ENCODE measurements at regions of chr1 and their contacts with region 1.

Region 1: GRCh38 chr1:207404849-207405525 is 49.1 kb upstream of the CR2 start:
- DNase-seq: peak in 7 of 9 donors; percentile 25 to 69 (median 56)
- ATAC-seq: peak; percentile 89
- H3K4me3 ChIP-seq: no peak overlapping the region
- H3K4me3 Mint-ChIP-seq: no peak overlapping the region
- H3K27ac ChIP-seq: no peak overlapping the region
- H3K27ac Mint-ChIP-seq: no peak overlapping the region
- H3K4me1 ChIP-seq: no peaks in the 10 kb centered on the region
- H3K4me1 Mint-ChIP-seq: peaks cover 0 to 13% (median 0%) of the 10 kb centered on the region in 7 donors
- H3K27me3 ChIP-seq: no peaks in the 10 kb centered on the region
- H3K27me3 Mint-ChIP-seq: peaks cover 0 to 3% (median 0%) of the 10 kb centered on the region in 5 donors

Region 2: GRCh38 chr1:206649261-206649921 is 755.6 kb before region 1 on chr1:
- CTCF ChIA-PET with region 1: no interaction called
- POLR2A ChIA-PET with region 1: no interaction called
- intact Hi-C with region 1: no loop called
- DNase-seq: no peak
- ATAC-seq: no peak
- H3K4me3 ChIP-seq: no peak overlapping the region
- H3K4me3 Mint-ChIP-seq: no peak overlapping the region
- H3K27ac ChIP-seq: no peak overlapping the region
- H3K27ac Mint-ChIP-seq: no peak overlapping the region
- H3K4me1 ChIP-seq: no peaks in the 10 kb centered on the region
- H3K4me1 Mint-ChIP-seq: no peaks in the 10 kb centered on the region
- H3K27me3 ChIP-seq: no peaks in the 10 kb centered on the region
- H3K27me3 Mint-ChIP-seq: no peaks in the 10 kb centered on the region

Region 3: DNA sequence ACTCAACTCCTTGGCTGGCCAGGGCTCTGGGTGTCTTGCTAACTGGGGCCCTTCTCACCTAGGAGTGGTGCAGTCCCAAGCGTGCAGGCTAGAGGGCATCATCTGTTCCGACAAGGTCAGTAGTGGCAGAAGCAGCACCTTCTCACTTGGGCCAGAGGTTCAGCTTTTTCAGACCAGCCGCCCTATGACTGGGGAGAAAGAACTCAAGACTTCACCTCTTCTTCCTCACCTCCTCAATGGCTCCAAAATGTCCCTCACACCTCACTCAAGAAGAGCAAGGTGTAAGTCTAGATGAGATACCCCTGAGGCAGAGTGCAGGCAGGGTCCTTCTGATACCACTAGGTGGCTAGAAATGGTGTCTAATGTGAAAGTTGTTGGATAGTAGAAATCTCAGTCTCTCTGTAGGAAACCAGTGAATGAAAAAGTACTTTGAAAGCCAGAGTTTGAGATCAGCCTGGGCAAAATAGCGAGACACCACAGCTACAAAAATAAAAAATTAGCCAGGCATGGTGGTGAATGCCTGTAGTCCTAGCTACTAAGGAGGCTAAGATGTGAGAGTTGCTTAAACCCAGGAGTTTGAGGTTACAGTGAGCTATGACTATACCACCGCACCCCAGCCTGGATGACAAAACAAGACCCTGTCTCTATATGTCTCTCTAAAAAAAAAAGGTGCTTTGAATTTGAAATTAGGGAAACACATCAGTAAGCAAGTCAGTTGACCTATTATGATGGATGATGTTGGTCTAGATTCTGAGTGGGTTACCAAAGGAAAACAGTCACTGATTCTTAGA is 548.1 kb before region 1 on chr1:
- CTCF ChIA-PET with region 1: no interaction called
- POLR2A ChIA-PET with region 1: no interaction called
- intact Hi-C with region 1: no loop called
- DNase-seq: peak in 5 of 9 donors; percentile 19 to 32 (median 28)
- ATAC-seq: peak; percentile 54
- H3K4me3 ChIP-seq: no peak overlapping the region
- H3K4me3 Mint-ChIP-seq: no peak overlapping the region
- H3K27ac ChIP-seq: no peak overlapping the region
- H3K27ac Mint-ChIP-seq: peak overlapping the region in 1 of 9 donors; percentile 55
- H3K4me1 ChIP-seq: peaks cover 0 to 15% of the 10 kb centered on the region in 2 donors
- H3K4me1 Mint-ChIP-seq: peaks cover 7 to 31% (median 24%) of the 10 kb centered on the region in 7 donors
- H3K27me3 ChIP-seq: no peaks in the 10 kb centered on the region
- H3K27me3 Mint-ChIP-seq: peaks cover 0 to 32% (median 0%) of the 10 kb centered on the region in 5 donors

Region 4: GRCh38 chr1:207047505-207047904 is 357.5 kb before region 1 on chr1:
- CTCF ChIA-PET with region 1: interaction called, 10 read pairs
- POLR2A ChIA-PET with region 1: no interaction called
- intact Hi-C with region 1: loop called (anchors 1 kb)
- DNase-seq: no peak
- ATAC-seq: no peak
- H3K4me3 ChIP-seq: no peak overlapping the region
- H3K4me3 Mint-ChIP-seq: peak overlapping the region in 4 of 10 donors; percentile 19 to 42 (median 38)
- H3K27ac ChIP-seq: no peak overlapping the region
- H3K27ac Mint-ChIP-seq: no peak overlapping the region
- H3K4me1 ChIP-seq: peaks cover 11 to 21% of the 10 kb centered on the region in 2 donors
- H3K4me1 Mint-ChIP-seq: peaks cover 34 to 89% (median 79%) of the 10 kb centered on the region in 7 donors
- H3K27me3 ChIP-seq: no peaks in the 10 kb centered on the region
- H3K27me3 Mint-ChIP-seq: no peaks in the 10 kb centered on the region

Region 5: GRCh38 chr1:207062058-207062457 is 342.9 kb before region 1 on chr1:
- CTCF ChIA-PET with region 1: interaction called, 10 read pairs
- POLR2A ChIA-PET with region 1: no interaction called
- intact Hi-C with region 1: no loop called
- DNase-seq: no peak
- ATAC-seq: no peak
- H3K4me3 ChIP-seq: no peak overlapping the region
- H3K4me3 Mint-ChIP-seq: no peak overlapping the region
- H3K27ac ChIP-seq: no peak overlapping the region
- H3K27ac Mint-ChIP-seq: no peak overlapping the region
- H3K4me1 ChIP-seq: no peaks in the 10 kb centered on the region
- H3K4me1 Mint-ChIP-seq: peaks cover 0 to 5% (median 0%) of the 10 kb centered on the region in 7 donors
- H3K27me3 ChIP-seq: no peaks in the 10 kb centered on the region
- H3K27me3 Mint-ChIP-seq: no peaks in the 10 kb centered on the region

Region 6: GRCh38 chr1:207084701-207085180 is 320.2 kb before region 1 on chr1:
- CTCF ChIA-PET with region 1: interaction called, 63 read pairs
- POLR2A ChIA-PET with region 1: interaction called, 6 read pairs
- intact Hi-C with region 1: loop called (anchors 1 kb)
- DNase-seq: peak in 8 of 9 donors; percentile 43 to 71 (median 62)
- ATAC-seq: peak; percentile 67
- H3K4me3 ChIP-seq: no peak overlapping the region
- H3K4me3 Mint-ChIP-seq: no peak overlapping the region
- H3K27ac ChIP-seq: no peak overlapping the region
- H3K27ac Mint-ChIP-seq: peak overlapping the region in 5 of 9 donors; percentile 5 to 78 (median 53)
- H3K4me1 ChIP-seq: peaks cover 0 to 15% of the 10 kb centered on the region in 2 donors
- H3K4me1 Mint-ChIP-seq: peaks cover 3 to 33% (median 32%) of the 10 kb centered on the region in 7 donors
- H3K27me3 ChIP-seq: no peaks in the 10 kb centered on the region
- H3K27me3 Mint-ChIP-seq: peaks cover 0 to 34% (median 0%) of the 10 kb centered on the region in 5 donors

Region 7: DNA sequence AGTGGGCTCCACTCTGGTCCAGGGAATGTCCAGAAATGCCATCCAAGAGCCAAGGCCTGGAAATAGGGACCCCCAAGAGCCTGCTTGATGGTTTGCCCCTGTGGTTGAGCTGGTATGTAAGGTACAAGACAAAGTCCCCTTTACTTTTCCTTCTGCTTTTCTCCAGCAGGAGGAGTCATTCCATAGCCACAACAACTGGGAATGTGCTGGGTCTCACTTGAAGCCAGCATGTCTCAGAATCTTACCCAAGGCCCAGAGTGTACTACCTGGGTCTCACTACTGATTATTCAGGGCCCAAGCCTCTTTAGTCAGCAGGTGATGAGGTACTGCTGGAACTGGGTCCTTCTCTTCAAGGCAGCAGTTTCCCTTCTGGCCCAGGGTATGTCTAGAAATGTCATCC is 145.6 kb before region 1 on chr1:
- CTCF ChIA-PET with region 1: interaction called, 4 read pairs
- POLR2A ChIA-PET with region 1: no interaction called
- intact Hi-C with region 1: loop called (anchors 1 to 10 kb)
- DNase-seq: no peak
- ATAC-seq: no peak
- H3K4me3 ChIP-seq: no peak overlapping the region
- H3K4me3 Mint-ChIP-seq: peak overlapping the region in 1 of 10 donors; percentile 22
- H3K27ac ChIP-seq: no peak overlapping the region
- H3K27ac Mint-ChIP-seq: no peak overlapping the region
- H3K4me1 ChIP-seq: no peaks in the 10 kb centered on the region
- H3K4me1 Mint-ChIP-seq: no peaks in the 10 kb centered on the region
- H3K27me3 ChIP-seq: no peaks in the 10 kb centered on the region
- H3K27me3 Mint-ChIP-seq: peaks cover 0 to 4% (median 2%) of the 10 kb centered on the region in 5 donors

Region 8: DNA sequence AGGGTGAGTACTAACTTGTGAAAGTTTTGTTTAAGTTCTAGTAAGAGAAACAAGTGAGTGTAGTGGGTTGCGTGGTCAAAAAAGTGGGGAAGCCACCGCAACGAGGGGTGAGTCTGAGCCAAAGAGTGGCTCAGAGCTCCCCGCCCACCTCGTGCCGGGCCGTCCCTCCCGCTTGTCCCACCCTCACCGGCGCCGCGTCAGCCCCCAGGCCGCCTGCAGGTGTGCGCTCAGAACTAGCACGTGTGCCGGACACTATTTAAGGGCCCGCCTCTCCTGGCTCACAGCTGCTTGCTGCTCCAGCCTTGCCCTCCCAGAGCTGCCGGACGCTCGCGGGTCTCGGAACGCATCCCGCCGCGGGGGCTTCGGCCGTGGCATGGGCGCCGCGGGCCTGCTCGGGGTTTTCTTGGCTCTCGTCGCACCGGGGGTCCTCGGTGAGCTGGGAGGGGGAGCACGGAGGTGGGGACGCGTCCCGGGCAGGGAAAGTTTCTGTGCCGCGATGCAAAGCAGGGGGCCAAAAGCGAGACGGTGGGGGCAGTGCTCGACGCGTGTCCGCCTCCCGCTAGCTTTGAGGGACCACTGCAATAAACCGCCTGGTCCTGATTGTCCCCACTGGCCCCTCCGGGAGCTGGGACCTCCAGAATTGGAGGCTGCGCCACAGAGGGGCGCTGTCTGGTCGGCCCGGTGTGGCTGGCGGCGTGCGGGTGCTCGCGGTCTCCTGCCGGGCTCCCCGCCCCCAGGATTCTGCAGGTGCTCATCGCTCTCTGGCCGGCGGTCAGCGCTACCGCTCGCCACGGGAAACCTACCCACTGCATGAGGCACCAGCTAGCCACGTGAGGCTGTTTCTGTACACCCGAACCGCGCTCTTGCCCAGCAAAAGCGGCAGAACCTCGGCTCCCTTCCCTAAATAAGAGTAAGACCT is 49.3 kb after region 1 on chr1 and contains the start of gene CR2:
- CTCF ChIA-PET with region 1: interaction called, 4 read pairs
- POLR2A ChIA-PET with region 1: no interaction called
- intact Hi-C with region 1: loop called in 1 of 2 experiments (anchors 2 kb)
- DNase-seq: peak; percentile 15 to 57 (median 41)
- ATAC-seq: peak; percentile 73
- H3K4me3 ChIP-seq: peak within 1 kb of the TSS; percentile 53
- H3K4me3 Mint-ChIP-seq: peak within 1 kb of the TSS in 8 of 10 donors; percentile 50 to 90 (median 82)
- H3K27ac ChIP-seq: peak within 1 kb of the TSS; percentile 48
- H3K27ac Mint-ChIP-seq: peak within 1 kb of the TSS in 6 of 9 donors; percentile 22 to 81 (median 67)
- H3K4me1 ChIP-seq: peaks cover 9 to 35% of the 10 kb centered on the region in 2 donors
- H3K4me1 Mint-ChIP-seq: peaks cover 5 to 16% (median 6%) of the 10 kb centered on the region in 7 donors
- H3K27me3 ChIP-seq: peaks cover 0 to 7% of the 10 kb centered on the region in 2 donors
- H3K27me3 Mint-ChIP-seq: peaks cover 0 to 37% (median 30%) of the 10 kb centered on the region in 5 donors
- total RNA-seq, gene CR2: 2.6 to 13.1 (median 3.4) TPM in 4 of 5 experiments, not detected in the other